ENCODE measurements at regions of chr17 and their contacts with region 1.

Region 1: GRCh38 chr17:2592971-2593820 is at the start of gene PAFAH1B1:
- DNase-seq: peak; percentile 73 to 92
- H3K4me3 ChIP-seq: peak within 1 kb of the TSS; percentile 75 to 92
- H3K27ac ChIP-seq: peak within 1 kb of the TSS; percentile 96 to 98
- H3K4me1 ChIP-seq: peaks cover 3 to 17% of the 10 kb centered on the region in 2 donors
- H3K27me3 ChIP-seq: no peaks in the 10 kb centered on the region
- CTCF ChIP-seq: peak in 2 of 3 experiments; percentile 4 to 16
- total RNA-seq, gene PAFAH1B1: 29.6 TPM

Region 2: DNA sequence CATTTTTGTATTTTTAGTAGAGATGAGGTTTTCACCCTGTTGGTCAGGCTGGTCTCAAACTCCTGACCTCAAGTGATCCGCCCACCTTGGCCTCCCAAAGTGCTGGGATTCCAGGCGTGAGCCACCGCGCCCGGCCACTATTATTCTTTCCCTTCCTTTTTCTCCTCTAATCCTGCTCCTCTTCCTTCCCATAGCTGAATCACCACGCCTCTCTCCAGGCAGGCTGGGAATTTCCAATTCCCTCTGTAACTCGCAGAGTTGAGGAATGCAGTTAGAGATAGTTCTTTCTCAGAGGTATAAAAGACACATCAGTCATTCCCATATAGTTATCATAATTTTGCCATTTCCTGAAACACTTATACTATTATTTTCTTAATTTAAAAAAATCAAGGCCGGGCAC is 92.8 kb before region 1 on chr17:
- intact Hi-C with region 1: no loop called
- DNase-seq: no peak
- H3K4me3 ChIP-seq: no peak overlapping the region
- H3K27ac ChIP-seq: no peak overlapping the region
- H3K4me1 ChIP-seq: no peaks in the 10 kb centered on the region
- H3K27me3 ChIP-seq: no peaks in the 10 kb centered on the region
- CTCF ChIP-seq: no peak

Region 3: GRCh38 chr17:2511462-2512369 is 81.5 kb before region 1 on chr17 and contains the start of gene METTL16:
- intact Hi-C with region 1: loop called (anchors 1 kb)
- DNase-seq: peak; percentile 96 to 100
- H3K4me3 ChIP-seq: peak within 1 kb of the TSS; percentile 65 to 79
- H3K27ac ChIP-seq: peak within 1 kb of the TSS; percentile 88 to 91
- H3K4me1 ChIP-seq: peaks cover 9 to 14% of the 10 kb centered on the region in 2 donors
- H3K27me3 ChIP-seq: no peaks in the 10 kb centered on the region
- CTCF ChIP-seq: no peak
- total RNA-seq, gene METTL16: 15.3 TPM

Region 4: DNA sequence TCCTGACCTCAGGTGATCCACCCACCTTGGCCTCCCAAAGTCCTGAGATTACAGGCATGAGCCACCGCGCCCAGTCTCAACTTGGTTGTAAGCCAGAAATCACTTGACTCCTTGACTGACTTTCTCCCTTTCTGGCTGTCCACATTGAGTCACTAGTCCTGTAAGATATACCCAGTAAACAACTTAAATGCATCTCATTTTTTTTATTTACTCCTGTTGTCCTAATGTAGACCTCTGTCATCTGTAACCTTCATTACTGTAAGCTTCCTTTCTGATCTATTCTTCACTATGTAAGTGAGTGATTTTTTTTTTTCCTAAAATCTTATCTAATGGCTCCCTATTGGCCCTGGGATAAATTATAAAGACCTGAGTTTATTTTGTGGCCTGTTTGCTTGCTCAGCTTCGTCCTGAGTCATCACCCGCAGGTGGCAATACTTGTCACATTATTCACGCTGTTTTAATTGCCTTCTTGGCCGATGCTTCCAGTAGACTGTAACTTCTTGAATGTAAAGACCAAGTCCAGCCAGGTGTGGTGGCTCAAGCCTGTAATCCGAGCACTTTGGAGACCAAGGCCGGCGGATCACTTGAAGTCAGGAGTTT is 41.3 kb after region 1 on chr17:
- intact Hi-C with region 1: loop called (anchors 5 kb)
- DNase-seq: no peak
- H3K4me3 ChIP-seq: no peak overlapping the region
- H3K27ac ChIP-seq: no peak overlapping the region
- H3K4me1 ChIP-seq: peaks cover 0 to 25% of the 10 kb centered on the region in 2 donors
- H3K27me3 ChIP-seq: no peaks in the 10 kb centered on the region
- CTCF ChIP-seq: no peak

Region 5: GRCh38 chr17:2656283-2656682 is 63.1 kb after region 1 on chr17:
- intact Hi-C with region 1: loop called (anchors 5 kb)
- DNase-seq: no peak
- H3K4me3 ChIP-seq: no peak overlapping the region
- H3K27ac ChIP-seq: no peak overlapping the region
- H3K4me1 ChIP-seq: peaks cover 0 to 16% of the 10 kb centered on the region in 2 donors
- H3K27me3 ChIP-seq: no peaks in the 10 kb centered on the region
- CTCF ChIP-seq: no peak

Region 6: GRCh38 chr17:2688351-2689342 is 95.5 kb after region 1 on chr17:
- intact Hi-C with region 1: loop called (anchors 5 kb)
- DNase-seq: peak in 1 of 2 donors; percentile 62
- H3K4me3 ChIP-seq: no peak overlapping the region
- H3K27ac ChIP-seq: no peak overlapping the region
- H3K4me1 ChIP-seq: peaks cover 0 to 8% of the 10 kb centered on the region in 2 donors
- H3K27me3 ChIP-seq: no peaks in the 10 kb centered on the region
- CTCF ChIP-seq: no peak

Region 7: DNA sequence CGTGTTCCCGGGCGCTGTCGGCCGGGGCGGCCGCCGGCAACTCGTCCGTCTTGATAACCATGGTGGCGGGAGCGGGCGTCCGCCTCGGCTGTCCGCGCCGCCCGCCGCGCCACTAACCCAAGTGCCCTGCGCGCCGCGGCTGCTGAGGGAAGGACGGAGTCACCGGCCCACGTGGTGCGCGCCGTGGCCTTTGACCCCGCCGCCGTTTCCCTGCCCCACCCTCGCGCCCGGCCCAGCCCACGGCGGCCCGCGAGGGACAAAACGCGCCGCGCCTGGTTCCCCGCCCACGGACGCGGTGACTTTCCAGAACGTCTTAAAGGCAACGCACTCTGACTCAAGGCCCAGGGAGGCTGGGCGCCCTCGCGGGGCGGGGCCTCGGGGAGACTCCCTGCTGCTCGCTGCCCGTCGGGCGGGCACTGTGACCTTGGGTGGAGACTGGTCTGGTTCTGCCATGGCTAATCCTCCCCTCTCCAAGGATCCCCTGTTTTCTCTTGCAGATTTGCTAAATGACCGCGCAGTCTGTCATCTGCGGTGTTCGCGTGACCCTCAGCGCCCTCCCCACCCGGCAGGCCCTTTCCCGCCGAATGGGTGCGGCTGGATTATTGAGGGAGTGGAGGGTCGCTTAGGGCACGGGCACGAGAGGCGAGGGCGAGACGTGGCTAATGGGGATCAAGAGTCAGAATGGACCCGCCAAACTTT is 118.6 kb after region 1 on chr17 and contains the start of gene CLUH:
- intact Hi-C with region 1: loop called (anchors 1 kb)
- DNase-seq: peak; percentile 92 to 98
- H3K4me3 ChIP-seq: peak within 1 kb of the TSS; percentile 77 to 95
- H3K27ac ChIP-seq: peak within 1 kb of the TSS; percentile 56 to 71
- H3K4me1 ChIP-seq: peaks cover 24 to 44% of the 10 kb centered on the region in 2 donors
- H3K27me3 ChIP-seq: no peaks in the 10 kb centered on the region
- CTCF ChIP-seq: no peak
- total RNA-seq, gene CLUH: 58.1 TPM

Region 8: GRCh38 chr17:3004133-3004801 is 411.1 kb after region 1 on chr17:
- intact Hi-C with region 1: loop called (anchors 10 kb)
- DNase-seq: peak; percentile 99
- H3K4me3 ChIP-seq: peak overlapping the region; percentile 7 to 49
- H3K27ac ChIP-seq: peak overlapping the region; percentile 88 to 95
- H3K4me1 ChIP-seq: peaks cover 10 to 11% of the 10 kb centered on the region in 2 donors
- H3K27me3 ChIP-seq: no peaks in the 10 kb centered on the region
- CTCF ChIP-seq: no peak

Measured in ascending aorta (tissue), 2 donors.